GM10248 (cell line): ENCODE measurements at regions of chr5 and their contacts with region 1.

Region 1: DNA sequence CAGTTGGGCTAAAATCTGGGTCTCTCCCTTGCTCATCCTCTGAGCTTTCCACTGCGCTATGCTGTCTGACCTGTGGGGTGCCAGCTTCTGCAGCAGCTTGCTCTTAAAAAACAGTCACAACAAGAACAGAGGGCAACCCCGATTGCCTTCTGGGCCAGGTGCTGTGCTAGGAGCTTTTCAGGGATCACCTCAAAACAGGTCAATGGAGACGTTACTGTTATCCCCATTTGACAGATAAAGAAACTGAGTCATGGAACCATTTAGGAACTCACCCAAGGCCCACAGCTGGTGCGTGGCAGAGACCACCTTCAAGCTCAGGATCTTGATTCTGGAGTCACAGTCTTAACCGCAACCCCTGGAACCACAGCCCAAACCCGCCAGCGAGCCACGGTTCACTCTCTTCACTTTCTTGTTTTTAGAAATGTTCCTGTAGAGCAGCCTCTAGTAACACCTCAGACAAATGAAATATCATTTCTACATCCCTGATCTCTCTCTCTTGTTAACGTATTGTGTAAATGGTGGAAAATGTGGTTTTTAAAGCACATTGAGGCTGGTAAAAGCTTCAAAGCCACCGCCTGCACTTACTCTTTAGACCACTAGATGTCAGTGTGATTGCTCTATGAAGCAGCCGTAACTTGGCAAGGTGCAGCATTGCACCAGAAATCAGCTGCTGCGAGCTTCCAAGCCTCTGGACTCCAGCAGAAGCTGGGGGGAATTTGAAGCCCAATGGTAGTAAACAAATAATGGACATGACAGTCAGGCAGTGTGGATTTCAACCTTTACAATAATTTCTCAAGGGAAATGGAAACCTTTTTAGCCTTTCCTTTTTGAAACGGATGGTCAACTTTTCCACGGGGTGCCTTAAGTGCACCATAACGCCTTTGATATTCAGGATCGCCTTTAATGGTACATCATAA is 1.7 kb downstream of the FYB1 start:
- DNase-seq: peak; percentile 65
- CTCF ChIP-seq: peak; percentile 95

Region 2: DNA sequence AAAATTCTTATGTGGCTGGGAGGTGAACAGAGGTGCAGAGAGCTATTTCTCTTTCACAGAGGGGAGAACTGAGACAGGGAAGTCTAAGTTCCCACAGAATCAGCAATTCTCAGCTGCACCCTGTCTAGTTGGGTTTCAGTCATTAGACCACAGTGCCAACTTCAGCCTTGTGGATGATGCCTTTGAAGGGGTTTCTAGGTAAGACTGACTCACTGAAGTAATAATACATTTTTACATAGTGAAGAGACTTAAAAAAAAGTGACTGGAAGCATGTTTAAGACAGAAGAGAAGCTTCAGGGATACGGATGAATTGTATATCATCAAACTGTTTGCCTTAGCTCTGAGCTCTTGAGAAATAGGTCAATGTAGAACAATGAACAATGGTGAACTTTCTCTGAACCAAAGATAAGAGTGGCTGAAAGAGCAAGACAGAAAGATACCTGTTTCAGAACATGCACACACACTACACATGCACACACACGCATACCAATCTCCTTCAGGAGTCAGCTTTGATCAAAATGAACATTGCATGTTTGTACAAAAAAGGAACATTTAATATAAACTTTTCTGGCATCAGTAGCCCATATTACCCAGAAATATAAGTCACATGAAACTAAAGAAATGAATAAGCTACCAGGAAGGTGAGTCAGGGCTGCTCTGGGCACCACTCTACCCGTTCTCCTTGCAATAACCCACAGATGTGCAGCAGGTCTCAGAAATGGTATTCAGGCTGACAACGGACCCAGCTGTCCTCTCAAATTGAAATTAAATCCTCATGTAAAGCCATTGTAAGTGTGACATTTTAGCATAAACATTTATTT is 14.3 kb after region 1 on chr5:
- CTCF ChIA-PET with region 1: interaction called, 50 read pairs
- POLR2A ChIA-PET with region 1: no interaction called
- DNase-seq: no peak
- CTCF ChIP-seq: no peak

Region 3: GRCh38 chr5:39274398-39275085 is 56.9 kb after region 1 on chr5:
- CTCF ChIA-PET with region 1: interaction called, 17 read pairs
- POLR2A ChIA-PET with region 1: no interaction called
- DNase-seq: peak; percentile 52
- CTCF ChIP-seq: no peak

Region 4: GRCh38 chr5:39376293-39376714 is 158.7 kb after region 1 on chr5:
- CTCF ChIA-PET with region 1: interaction called, 16 read pairs
- POLR2A ChIA-PET with region 1: no interaction called
- DNase-seq: peak; percentile 43
- CTCF ChIP-seq: peak; percentile 55